Activated CD4-positive, alpha-beta T cell treated with anti-CD3 and anti-CD28 coated beads for 36 hours (primary cell): ENCODE measurements at regions of chr3 and their contacts with region 1.

Region 1: GRCh38 chr3:196650740-196651311 is 11.3 kb downstream of the NRROS start:
- DNase-seq: no peak
- ATAC-seq: peak; percentile 80
- H3K4me3 Mint-ChIP-seq: no peak overlapping the region
- H3K27ac Mint-ChIP-seq: peak overlapping the region; percentile 13
- H3K4me1 Mint-ChIP-seq: peaks cover 37% of the 10 kb centered on the region
- H3K27me3 Mint-ChIP-seq: no peaks in the 10 kb centered on the region

Region 2: GRCh38 chr3:196268270-196269163 is 382.3 kb before region 1 on chr3:
- CTCF ChIA-PET with region 1: no interaction called
- POLR2A ChIA-PET with region 1: interaction called, 11 read pairs
- intact Hi-C with region 1: no loop called
- DNase-seq: no peak
- ATAC-seq: no peak
- H3K4me3 Mint-ChIP-seq: no peak overlapping the region
- H3K27ac Mint-ChIP-seq: no peak overlapping the region
- H3K4me1 Mint-ChIP-seq: peaks cover 23% of the 10 kb centered on the region
- H3K27me3 Mint-ChIP-seq: no peaks in the 10 kb centered on the region

Region 3: GRCh38 chr3:196463804-196464203 is 187.0 kb before region 1 on chr3:
- CTCF ChIA-PET with region 1: no interaction called
- POLR2A ChIA-PET with region 1: no interaction called
- intact Hi-C with region 1: no loop called
- DNase-seq: no peak
- ATAC-seq: no peak
- H3K4me3 Mint-ChIP-seq: no peak overlapping the region
- H3K27ac Mint-ChIP-seq: no peak overlapping the region
- H3K4me1 Mint-ChIP-seq: peaks cover 9% of the 10 kb centered on the region
- H3K27me3 Mint-ChIP-seq: no peaks in the 10 kb centered on the region

Region 4: DNA sequence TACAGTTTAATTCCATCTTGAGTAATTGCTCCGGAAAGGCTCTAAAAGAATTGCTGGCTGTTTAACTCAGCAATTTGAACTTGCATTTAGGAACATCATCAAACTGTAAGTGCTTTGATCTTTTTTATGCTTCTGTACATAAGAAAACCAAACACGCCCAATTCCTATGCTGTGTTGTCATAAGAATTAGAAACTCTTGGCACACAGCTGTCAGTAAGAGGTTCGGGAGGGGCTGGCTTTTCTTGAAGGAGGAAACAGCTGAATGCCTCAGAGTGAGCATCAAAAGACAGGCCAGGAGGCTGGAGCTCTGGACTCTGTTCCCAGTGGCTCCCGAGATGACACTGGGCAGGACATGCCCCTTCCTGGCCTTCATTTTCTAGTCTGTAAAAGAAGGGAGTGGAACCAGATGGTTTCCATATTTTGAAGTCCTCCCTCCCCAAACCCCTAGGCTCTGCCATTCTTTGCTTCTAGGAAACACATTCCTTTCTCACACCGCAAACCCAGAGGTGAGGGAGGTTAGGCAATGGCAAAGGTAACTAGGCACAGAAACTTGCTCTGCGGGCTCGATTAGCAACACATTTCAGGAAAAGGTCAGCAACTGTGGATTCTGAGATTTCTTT is 721.3 kb after region 1 on chr3:
- CTCF ChIA-PET with region 1: no interaction called
- POLR2A ChIA-PET with region 1: no interaction called
- intact Hi-C with region 1: no loop called
- DNase-seq: no peak
- ATAC-seq: no peak
- H3K4me3 Mint-ChIP-seq: no peak overlapping the region
- H3K27ac Mint-ChIP-seq: no peak overlapping the region
- H3K4me1 Mint-ChIP-seq: no peaks in the 10 kb centered on the region
- H3K27me3 Mint-ChIP-seq: no peaks in the 10 kb centered on the region